Psoas muscle (tissue), 8 donors: ENCODE measurements at regions of chr6 and their contacts with region 1.

Region 1: DNA sequence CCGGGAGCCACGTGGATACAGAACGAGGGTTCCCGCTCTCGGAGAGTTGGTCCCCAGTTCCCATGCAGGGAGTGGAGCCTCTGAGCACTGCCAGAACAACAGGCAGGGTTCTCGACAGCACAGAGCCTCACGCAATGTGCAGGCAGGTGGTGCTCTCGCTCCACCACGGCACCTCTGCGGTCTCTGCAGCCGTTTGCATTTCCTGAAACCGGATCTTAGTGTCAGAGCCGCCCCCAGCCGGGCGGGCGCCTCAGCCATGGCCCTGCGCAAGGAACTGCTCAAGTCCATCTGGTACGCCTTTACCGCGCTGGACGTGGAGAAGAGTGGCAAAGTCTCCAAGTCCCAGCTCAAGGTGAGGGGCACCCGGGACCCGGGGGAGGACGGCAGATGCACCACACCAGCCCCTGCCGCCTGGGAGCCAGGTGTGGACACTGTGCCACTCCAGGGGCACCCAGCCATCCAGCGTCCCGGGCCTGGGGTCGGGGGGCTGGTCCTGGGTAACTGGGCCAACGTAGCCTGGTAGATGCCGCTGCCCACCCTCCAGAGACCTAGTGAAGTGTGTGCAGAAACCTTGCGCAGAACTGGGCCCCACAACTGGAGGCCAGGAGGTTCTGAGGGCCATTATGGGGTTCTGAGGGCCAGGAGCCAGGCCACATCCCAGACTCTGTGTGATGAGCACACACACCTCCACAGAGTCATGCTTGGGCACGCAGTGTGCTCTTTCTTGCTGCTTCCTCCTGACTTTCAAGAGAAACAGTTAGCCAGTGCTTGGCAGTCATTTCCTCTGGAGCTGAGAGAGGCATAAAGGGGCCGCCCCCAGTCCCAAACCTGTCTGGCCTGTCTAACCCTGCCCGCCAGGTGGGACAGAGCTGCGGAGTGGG is at the start of gene DEF6:
- DNase-seq: peak; percentile 76 to 83
- ATAC-seq: peak; percentile 70 to 88 (median 80)
- H3K4me3 ChIP-seq: peak within 1 kb of the TSS; percentile 58
- H3K27ac ChIP-seq: peak within 1 kb of the TSS; percentile 38
- H3K4me1 ChIP-seq: peaks cover 13% of the 10 kb centered on the region
- H3K27me3 ChIP-seq: no peaks in the 10 kb centered on the region
- CTCF ChIP-seq: peak; percentile 61
- total RNA-seq, gene DEF6: 0.46 to 1.6 (median 0.64) TPM

Region 2: DNA sequence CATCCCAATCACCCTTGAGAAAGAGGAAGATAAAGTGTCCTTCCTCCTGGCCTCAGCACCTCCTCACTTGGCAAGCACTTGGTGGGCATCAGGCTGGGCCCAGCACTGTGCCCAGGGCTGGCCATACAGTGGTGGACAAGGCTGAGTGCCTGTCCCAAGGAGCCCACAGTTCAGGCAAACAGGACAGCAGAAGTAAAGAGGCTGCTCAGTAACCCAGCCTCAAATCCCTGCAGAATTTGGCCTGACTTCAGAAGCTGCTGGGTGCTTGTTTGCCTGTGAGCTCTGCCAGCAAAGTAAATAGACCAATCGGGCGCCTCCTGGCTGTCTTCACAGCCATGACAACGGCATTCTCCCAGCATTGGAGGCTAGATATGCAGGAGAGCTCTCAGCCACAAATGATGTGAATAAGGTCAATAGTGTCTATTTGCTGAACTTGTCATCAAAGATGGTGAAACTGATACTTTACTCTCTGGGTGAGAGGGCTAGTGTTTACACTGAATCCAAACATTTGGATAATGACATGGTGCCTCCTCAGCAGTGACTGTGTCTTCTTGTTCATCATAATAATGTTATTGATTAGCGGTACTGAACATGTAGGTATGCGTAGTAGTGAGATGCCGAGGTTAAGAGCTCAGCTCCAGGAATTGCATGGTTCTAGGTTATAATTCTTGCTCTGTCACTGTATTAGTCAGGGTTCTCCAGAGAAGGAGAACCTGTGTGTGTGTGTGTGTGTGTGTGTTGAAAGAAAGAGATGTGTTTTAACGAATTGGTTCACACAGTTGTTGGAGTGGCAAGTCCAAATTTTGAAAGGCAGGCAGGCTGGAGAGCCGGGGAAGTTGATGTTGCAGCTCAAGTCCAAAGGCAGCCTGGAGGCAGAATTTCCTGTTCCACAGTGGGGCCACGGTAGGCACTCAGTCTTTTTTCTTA is 117.5 kb after region 1 on chr6:
- intact Hi-C with region 1: no loop called
- DNase-seq: peak; percentile 56 to 83
- ATAC-seq: peak; percentile 75 to 96 (median 90)
- H3K4me3 ChIP-seq: no peak overlapping the region
- H3K27ac ChIP-seq: peak overlapping the region; percentile 46
- H3K4me1 ChIP-seq: peaks cover 11% of the 10 kb centered on the region
- H3K27me3 ChIP-seq: no peaks in the 10 kb centered on the region
- CTCF ChIP-seq: peak; percentile 57

Region 3: DNA sequence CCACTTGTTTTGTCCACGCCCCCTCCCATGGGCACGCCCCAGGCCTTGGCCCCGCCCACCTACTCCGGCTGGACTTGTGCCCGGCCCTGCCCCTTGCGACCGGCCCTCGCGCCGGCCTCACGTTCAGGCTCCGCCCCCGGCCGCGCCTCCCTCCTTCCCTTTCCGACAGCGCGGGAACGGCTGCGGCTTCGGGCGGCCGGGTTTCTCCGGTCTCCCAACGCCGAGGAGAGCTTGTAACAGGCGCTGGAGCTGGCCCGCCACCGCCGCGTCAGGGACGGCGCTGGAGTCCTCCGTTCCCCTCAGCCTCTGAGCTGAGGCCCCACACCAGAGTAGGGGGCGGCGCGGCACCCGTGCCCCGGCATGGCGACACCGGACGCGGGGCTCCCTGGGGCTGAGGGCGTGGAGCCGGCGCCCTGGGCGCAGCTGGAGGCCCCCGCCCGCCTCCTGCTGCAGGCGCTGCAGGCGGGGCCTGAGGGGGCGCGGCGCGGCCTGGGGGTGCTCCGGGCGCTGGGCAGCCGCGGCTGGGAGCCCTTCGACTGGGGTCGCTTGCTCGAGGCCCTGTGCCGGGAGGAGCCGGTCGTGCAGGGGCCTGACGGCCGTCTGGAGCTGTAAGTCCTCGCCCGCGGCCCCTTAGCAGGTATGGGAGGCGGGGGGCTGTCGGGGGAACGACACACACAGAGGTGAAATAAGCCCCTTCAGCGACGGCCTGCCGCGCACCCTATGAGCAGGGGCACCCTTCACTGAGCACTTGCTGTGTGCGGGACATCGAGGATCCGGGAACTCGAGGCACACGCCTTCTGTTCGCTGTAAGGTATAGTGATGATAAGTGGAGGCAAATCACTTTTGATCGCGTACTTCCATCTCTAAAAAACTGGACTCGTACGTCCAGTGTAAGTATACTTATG is 154.6 kb after region 1 on chr6 and contains the start of gene FANCE:
- intact Hi-C with region 1: loop called (anchors 1 to 5 kb)
- DNase-seq: peak; percentile 95 to 97
- ATAC-seq: peak; percentile 89 to 94 (median 92)
- H3K4me3 ChIP-seq: peak within 1 kb of the TSS; percentile 78
- H3K27ac ChIP-seq: peak within 1 kb of the TSS; percentile 81
- H3K4me1 ChIP-seq: peaks cover 29% of the 10 kb centered on the region
- H3K27me3 ChIP-seq: no peaks in the 10 kb centered on the region
- CTCF ChIP-seq: no peak
- total RNA-seq, gene FANCE: 5.7 to 9.3 (median 8.1) TPM

Region 4: DNA sequence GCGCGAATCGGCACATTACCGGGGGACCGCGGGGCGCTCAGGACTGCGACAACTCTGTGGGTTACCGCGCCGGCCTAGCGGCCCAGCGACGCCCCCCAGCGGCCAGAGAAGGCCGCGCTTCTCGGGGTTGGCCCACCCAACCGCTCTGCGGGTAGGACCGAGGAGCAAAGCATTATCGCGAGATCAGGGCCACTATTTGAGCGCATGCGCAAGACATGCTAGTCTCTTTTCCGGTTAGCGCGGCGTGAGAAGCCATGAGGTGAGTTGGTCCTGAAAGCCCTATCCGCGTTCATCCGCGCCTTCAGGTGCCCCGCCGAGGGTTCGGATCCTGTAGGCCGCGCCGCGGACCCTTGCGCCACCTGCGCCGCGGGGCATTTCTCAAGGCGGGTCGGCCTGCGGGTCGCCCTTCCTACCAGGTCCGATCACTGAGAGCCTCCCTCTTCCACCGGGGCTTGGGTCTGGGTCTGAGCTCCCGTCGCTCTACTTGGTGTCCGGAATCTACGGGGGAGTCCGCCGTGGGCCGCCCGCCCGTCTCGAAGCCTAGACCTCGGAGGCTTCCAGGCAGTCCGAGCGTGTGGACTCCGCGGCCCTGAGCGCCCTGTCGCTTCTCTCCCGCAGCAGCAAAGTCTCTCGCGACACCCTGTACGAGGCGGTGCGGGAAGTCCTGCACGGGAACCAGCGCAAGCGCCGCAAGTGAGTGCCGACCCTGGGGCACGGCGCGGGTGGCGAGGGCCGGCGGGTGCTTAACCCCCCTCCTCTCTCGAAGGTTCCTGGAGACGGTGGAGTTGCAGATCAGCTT is 170.5 kb after region 1 on chr6 and contains the start of gene RPL10A:
- intact Hi-C with region 1: loop called in 1 of 2 experiments (anchors 1 kb)
- DNase-seq: peak; percentile 93 to 97
- ATAC-seq: peak; percentile 88 to 90 (median 90)
- H3K4me3 ChIP-seq: peak within 1 kb of the TSS; percentile 91
- H3K27ac ChIP-seq: peak within 1 kb of the TSS; percentile 89
- H3K4me1 ChIP-seq: peaks cover 20% of the 10 kb centered on the region
- H3K27me3 ChIP-seq: no peaks in the 10 kb centered on the region
- CTCF ChIP-seq: peak; percentile 92
- total RNA-seq, gene RPL10A: 668 to 832 (median 736) TPM

Region 5: DNA sequence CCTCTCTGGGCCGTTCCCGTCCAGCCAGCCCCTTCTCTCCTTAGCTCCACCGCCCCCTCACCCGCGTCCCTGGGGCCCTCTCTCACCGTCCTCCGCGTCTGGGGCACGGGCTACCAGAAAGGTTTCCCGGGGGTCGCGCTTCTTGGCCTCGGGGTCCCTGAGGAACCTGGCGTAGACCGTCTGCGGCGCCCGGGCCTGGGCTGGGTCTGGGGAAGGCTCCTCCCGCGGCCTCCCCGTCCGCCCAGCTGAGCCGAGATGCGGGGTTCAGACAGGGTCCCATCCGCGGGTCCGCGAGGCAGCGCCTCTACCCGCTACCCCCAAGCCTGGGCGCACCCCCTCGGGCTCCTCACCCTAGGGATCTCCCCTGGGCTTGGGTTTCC is 213.7 kb after region 1 on chr6:
- intact Hi-C with region 1: no loop called
- DNase-seq: peak in 1 of 2 donors; percentile 37
- ATAC-seq: no peak
- H3K4me3 ChIP-seq: no peak overlapping the region
- H3K27ac ChIP-seq: no peak overlapping the region
- H3K4me1 ChIP-seq: no peaks in the 10 kb centered on the region
- H3K27me3 ChIP-seq: peaks cover 0 to 8% (median 4%) of the 10 kb centered on the region in 3 donors
- CTCF ChIP-seq: no peak

Region 6: GRCh38 chr6:35552285-35552917 is 254.6 kb after region 1 on chr6:
- intact Hi-C with region 1: loop called in 1 of 2 experiments (anchors 10 kb)
- DNase-seq: no peak
- ATAC-seq: peak in 1 of 4 donors; percentile 31
- H3K4me3 ChIP-seq: no peak overlapping the region
- H3K27ac ChIP-seq: no peak overlapping the region
- H3K4me1 ChIP-seq: no peaks in the 10 kb centered on the region
- H3K27me3 ChIP-seq: no peaks in the 10 kb centered on the region
- CTCF ChIP-seq: peak; percentile 63